ENCODE measurements at regions of chr7 and their contacts with region 1.

Region 1: GRCh38 chr7:119351320-119351719 is 921.7 kb upstream of the KCND2 start:
- DNase-seq: no peak
- ATAC-seq: no peak

Region 2: DNA sequence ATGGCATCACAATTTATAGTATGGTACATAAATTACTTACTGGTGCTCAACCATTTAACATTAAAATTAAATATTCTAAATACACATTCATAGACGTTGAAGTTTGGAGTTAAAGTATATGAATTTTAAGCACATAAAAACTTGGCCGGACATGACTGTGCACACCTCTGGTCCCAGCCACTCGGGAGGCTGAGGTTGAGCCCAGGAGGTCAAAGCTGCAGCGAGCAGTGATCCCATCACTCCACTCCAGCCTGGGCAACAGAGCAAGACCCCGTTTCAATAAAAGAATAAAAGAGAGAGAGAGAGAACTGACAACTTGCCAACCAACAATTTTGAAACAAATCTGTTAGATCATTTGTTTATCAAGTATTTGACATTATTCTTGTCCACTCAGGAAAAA is 21.6 kb before region 1 on chr7:
- intact Hi-C with region 1: loop called (anchors 2 kb)
- DNase-seq: no peak
- ATAC-seq: no peak

Region 3: GRCh38 chr7:119374436-119374835 is 23.1 kb after region 1 on chr7:
- intact Hi-C with region 1: no loop called
- DNase-seq: no peak
- ATAC-seq: no peak

Region 4: GRCh38 chr7:119756687-119757086 is 405.4 kb after region 1 on chr7:
- intact Hi-C with region 1: no loop called
- DNase-seq: no peak
- ATAC-seq: no peak

Measured in sciatic nerve (tissue), 2 donors.